ENCODE measurements at regions of chr7 and their contacts with region 1.

Region 1: DNA sequence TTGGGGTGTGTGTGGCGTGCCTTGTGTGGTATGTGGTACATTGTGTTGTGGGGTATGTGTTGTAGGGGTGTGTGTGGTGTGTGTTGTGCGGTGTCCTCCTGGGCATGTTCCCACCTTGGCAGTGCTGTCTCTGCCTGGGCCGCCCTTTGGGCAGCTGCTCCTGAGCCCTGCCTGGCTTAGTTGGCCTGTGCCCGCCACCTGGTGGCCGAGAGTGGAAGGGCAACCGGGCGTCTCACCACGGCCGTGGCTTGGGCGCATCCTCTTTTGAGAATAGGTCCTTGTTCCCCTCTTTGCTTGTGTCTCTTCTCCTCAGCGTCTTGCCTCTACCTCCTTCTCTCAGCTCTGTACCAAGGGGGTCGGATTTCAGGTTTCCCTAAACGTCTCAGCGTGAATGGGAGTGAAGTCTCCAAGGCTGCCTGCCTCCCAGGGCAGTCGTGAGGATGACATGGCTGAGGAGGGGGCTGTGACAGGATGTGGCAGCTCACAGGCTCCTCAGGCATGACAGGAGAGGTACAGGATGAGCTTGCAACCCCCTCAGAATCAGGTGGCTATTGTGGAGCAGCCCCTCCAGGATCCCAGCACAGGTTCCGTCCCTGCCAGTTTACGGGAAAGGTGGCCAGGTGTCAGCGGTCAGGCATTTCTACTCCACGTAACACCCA is 98.4 kb upstream of the PODXL start:
- DNase-seq: peak; percentile 95
- H3K4me3 Mint-ChIP-seq: no peak overlapping the region
- H3K27ac Mint-ChIP-seq: no peak overlapping the region
- H3K4me1 Mint-ChIP-seq: peaks cover 5% of the 10 kb centered on the region
- H3K27me3 Mint-ChIP-seq: no peaks in the 10 kb centered on the region

Region 2: DNA sequence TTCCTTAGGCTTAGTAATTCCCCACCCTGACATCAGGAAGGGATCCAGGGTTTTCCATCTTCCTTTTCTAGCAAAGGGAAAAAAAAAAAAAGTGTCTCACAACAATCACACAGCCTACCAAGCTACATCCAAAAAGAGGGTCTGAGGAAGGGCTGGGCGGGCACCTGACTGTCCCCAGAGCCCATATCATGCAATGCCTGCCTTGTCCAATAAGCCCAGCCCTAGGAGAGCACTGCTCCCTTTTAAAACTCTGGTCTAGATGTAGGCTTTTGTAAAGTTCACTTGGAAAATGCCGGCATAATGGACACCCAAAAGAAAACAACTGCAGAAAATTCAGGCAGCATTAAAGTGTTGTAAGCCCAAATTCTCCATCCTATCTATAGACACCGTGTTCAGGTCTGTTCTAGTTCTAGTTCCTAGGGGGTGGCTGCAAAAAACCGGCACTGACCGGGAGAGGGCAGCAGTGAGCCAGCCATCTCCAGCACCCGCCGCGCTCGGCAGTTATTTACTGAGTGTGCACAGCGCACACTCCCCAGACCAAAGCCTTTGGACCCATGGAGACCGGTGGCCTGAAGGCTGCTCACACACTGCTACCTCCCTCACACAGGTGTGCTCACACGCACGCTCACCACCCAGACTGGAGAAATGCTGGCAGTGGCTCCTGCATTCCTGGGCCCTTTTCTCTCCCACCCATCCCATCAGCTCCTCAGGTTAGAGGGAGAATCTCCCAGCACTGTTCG is 147.0 kb before region 1 on chr7:
- intact Hi-C with region 1: loop called (anchors 1 kb)
- DNase-seq: peak; percentile 94
- H3K4me3 Mint-ChIP-seq: peak overlapping the region; percentile 13
- H3K27ac Mint-ChIP-seq: no peak overlapping the region
- H3K4me1 Mint-ChIP-seq: peaks cover 26% of the 10 kb centered on the region
- H3K27me3 Mint-ChIP-seq: peaks cover 5% of the 10 kb centered on the region

Region 3: GRCh38 chr7:131546583-131547111 is 108.2 kb before region 1 on chr7:
- intact Hi-C with region 1: loop called (anchors 10 kb)
- DNase-seq: peak; percentile 85
- H3K4me3 Mint-ChIP-seq: no peak overlapping the region
- H3K27ac Mint-ChIP-seq: no peak overlapping the region
- H3K4me1 Mint-ChIP-seq: peaks cover 8% of the 10 kb centered on the region
- H3K27me3 Mint-ChIP-seq: peaks cover 6% of the 10 kb centered on the region

Region 4: DNA sequence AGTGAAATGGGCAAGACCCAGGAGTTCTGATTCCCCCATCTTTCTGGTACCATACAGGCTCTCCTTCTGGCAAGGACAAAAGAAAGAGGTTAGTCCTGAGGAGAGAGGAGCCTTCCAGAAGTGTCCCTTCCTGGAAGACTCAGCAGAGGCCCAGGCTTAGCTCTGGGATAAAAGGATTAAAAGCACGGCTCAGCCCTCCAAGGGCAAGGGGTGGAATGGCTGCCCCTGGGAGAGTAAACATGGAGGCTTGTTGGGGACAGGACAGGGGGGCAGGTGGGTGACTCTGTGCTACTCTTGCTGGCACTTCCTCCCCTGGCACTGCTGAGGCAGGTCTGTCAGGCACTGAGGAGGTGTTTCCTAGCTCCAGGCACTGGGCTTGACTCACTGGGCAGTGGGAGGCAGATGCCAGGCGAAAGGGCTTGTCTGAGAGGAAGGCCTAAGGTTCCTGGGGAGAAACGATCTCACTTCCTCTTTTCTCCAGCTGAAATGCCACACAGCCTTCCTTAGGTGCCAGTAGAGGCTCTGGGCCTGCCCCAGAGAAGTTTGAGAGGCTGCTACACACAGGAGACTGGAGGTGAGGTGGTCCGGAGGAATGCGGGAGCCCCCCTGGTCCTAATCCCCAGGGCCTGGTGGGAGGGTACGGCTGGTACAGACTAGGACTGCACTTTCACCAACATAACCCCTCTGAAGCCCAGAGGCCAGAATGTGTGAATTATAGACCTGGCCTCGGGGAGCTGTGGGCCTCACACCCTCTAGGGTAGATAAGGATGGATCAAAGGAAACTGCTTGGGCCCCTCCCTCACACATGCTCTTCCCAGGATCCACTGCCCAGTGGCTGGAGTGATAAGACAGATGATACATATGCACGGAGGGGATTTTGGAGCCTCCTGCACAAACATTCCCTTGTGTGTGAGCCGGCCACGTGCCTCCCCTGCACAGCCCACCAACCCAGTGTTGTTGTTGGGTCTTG is 35.2 kb before region 1 on chr7:
- intact Hi-C with region 1: no loop called
- DNase-seq: no peak
- H3K4me3 Mint-ChIP-seq: no peak overlapping the region
- H3K27ac Mint-ChIP-seq: no peak overlapping the region
- H3K4me1 Mint-ChIP-seq: no peaks in the 10 kb centered on the region
- H3K27me3 Mint-ChIP-seq: peaks cover 1% of the 10 kb centered on the region

Region 5: DNA sequence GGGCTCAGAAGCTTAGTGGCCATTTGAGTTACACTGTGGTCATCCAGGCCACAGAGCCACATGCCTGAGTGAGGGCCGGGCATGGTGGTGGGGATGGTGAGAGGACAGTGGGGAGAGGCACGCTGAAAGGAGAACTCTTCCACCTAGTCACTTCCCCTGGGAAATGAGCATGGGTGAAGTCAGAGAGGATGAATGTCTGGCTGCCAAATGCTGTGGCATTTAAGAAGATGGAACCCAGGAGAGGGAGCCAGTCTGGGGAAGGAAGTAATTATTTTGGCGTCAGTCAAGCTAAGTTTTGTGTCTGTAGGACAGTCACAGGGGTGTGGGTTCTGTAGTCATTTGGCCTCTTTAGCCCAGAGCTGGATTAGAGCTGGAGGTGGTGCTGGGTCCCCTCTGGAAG is 12.4 kb before region 1 on chr7:
- intact Hi-C with region 1: no loop called
- DNase-seq: no peak
- H3K4me3 Mint-ChIP-seq: no peak overlapping the region
- H3K27ac Mint-ChIP-seq: no peak overlapping the region
- H3K4me1 Mint-ChIP-seq: no peaks in the 10 kb centered on the region
- H3K27me3 Mint-ChIP-seq: peaks cover 2% of the 10 kb centered on the region

Region 6: GRCh38 chr7:131674131-131674530 is 19.3 kb after region 1 on chr7:
- intact Hi-C with region 1: no loop called
- DNase-seq: no peak
- H3K4me3 Mint-ChIP-seq: no peak overlapping the region
- H3K27ac Mint-ChIP-seq: no peak overlapping the region
- H3K4me1 Mint-ChIP-seq: no peaks in the 10 kb centered on the region
- H3K27me3 Mint-ChIP-seq: peaks cover 8% of the 10 kb centered on the region

Measured in activated CD4-positive, alpha-beta T cell treated with anti-CD3 and anti-CD28 coated beads, Interleukin-2, amount 10 ng/mL, durations not matched to agents 24 days and 14 days (primary cell).